Posterior vena cava (tissue), 2 donors: ENCODE measurements at regions of chr7 and their contacts with region 1.

Region 1: GRCh38 chr7:92609921-92610518 is 19.8 kb upstream of the FAM133B start:
- DNase-seq: no peak

Region 2: GRCh38 chr7:92916674-92917224 is 306.7 kb after region 1 on chr7:
- intact Hi-C with region 1: no loop called
- DNase-seq: no peak

Region 3: GRCh38 chr7:93055543-93056107 is 445.6 kb after region 1 on chr7:
- intact Hi-C with region 1: loop called in 1 of 2 experiments (anchors 10 kb)
- DNase-seq: no peak